Activated T-helper 2 cell treated with anti-CD3 and anti-CD28 coated beads, Interferon-gamma antibody, Interleukin-2, Interleukin-4, amounts not matched to agents 10 μg/mL and 5 μg/mL and 100 μg/mL, durations not matched to agents 14 hours and 24 hours and 36 hours (primary cell): ENCODE measurements at regions of chr13 and their contacts with region 1.

Region 1: GRCh38 chr13:40026174-40026585 is 370.7 kb downstream of the COG6 start:
- DNase-seq: peak; percentile 64
- H3K4me3 Mint-ChIP-seq: no peak overlapping the region
- H3K27ac Mint-ChIP-seq: peak overlapping the region; percentile 55
- H3K4me1 Mint-ChIP-seq: peaks cover 42% of the 10 kb centered on the region
- H3K27me3 Mint-ChIP-seq: no peaks in the 10 kb centered on the region

Region 2: DNA sequence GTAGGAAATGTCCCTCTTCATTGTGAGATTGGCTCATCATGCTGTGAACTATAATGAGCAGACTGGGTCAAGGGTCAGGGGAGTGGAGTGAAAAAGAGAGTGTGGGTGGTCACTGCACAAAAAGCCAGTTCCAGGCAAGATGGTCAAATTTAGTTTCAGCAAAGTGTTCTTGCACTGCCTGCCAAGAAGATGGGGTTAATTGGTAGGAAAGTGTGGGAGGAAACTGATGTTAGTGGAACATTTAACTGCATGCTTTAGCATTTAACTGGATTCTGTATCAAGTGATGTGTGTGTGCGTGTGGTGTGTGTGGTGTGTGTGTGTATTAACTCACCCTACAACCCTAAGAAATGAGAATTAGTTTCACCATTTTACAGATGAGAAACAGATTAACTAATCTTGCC is 239.1 kb before region 1 on chr13:
- intact Hi-C with region 1: loop called (anchors 1 kb)
- DNase-seq: no peak
- H3K4me3 Mint-ChIP-seq: no peak overlapping the region
- H3K27ac Mint-ChIP-seq: peak overlapping the region; percentile 34
- H3K4me1 Mint-ChIP-seq: peaks cover 21% of the 10 kb centered on the region
- H3K27me3 Mint-ChIP-seq: no peaks in the 10 kb centered on the region

Region 3: DNA sequence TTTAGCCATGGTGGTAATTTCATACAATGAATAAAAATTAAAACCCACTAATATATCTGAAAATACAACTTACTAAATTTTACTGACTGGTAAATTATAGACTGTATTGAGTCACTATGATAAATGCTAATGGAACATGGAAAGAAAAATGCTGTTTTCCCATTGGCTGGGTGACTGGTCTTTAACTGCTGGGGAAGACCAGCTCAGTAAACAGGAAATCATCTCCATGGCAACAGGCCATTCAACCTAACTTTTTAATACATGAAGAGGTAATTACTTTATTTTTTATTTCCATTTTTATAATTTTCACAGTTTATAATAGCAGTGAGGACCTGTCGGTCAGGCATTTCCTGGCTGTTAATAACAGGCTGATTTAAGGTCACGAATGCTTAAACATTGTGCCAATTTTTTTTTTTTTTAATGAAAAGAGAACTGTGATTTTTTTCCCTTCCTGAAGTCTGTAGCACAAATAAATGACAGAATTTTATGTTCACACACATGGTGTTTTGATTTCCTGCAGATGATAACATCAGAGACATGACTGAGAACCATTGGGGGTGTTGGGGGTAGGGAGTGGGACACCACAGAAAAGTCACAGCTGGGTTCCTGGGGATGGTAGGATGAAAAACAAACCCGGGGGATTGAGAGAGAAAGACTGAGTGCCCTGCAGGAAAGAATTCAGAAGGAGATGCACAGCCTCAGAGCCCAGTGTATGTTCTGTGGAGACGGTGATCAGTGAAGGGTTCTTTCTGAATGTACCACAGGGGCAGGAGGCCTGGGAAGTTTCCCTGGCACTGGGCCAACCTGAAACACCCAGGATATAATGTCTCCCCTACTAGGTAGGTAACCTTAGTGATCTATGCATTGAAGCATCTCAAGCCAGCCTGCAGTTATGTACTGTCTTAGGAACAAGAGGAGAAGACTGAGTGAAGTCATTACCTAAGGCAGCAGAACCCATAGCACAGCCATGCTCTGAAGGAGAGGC is 73.6 kb before region 1 on chr13:
- intact Hi-C with region 1: loop called (anchors 1 kb)
- DNase-seq: no peak
- H3K4me3 Mint-ChIP-seq: no peak overlapping the region
- H3K27ac Mint-ChIP-seq: peak overlapping the region; percentile 6
- H3K4me1 Mint-ChIP-seq: peaks cover 42% of the 10 kb centered on the region
- H3K27me3 Mint-ChIP-seq: peaks cover 6% of the 10 kb centered on the region

Region 4: DNA sequence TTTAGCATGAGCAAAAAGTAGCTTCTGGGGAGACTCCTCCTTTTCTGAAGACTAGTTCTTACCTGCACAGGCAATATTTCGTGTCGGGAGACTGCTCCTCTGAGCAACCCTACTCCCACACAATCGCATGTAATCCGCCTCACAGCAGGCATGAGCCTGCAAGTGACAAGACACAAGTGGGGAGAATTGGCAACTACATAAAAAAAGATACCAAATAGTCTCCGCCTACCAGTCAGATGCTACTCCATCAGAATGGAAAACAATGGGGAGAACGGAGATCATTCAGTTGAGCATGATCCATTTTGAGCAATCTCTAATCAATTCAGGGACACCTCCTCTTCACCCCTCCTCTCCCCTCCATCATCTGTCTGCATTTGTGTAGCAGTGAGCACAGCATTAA is 49.7 kb before region 1 on chr13:
- intact Hi-C with region 1: no loop called
- DNase-seq: no peak
- H3K4me3 Mint-ChIP-seq: no peak overlapping the region
- H3K27ac Mint-ChIP-seq: no peak overlapping the region
- H3K4me1 Mint-ChIP-seq: no peaks in the 10 kb centered on the region
- H3K27me3 Mint-ChIP-seq: peaks cover 14% of the 10 kb centered on the region

Region 5: DNA sequence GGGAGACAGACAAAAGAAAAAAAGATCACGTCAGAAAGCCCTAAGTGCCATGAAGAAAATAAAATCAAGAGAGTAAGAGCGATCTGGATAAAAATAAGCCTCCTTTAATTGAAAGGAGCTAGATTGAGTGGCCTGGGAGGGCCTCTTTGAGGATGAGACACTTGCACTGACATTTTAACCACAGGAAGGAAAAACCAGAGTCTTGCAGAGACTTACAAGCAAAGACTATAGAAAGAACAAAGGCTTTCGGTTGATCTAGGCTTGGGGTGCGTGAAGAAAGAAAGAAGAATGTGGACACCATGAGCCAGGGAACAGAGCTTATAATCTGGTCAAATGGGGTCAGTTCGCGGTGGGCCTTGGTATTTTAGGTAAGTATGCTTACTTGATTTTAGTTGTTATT is 28.0 kb before region 1 on chr13:
- intact Hi-C with region 1: no loop called
- DNase-seq: no peak
- H3K4me3 Mint-ChIP-seq: no peak overlapping the region
- H3K27ac Mint-ChIP-seq: no peak overlapping the region
- H3K4me1 Mint-ChIP-seq: peaks cover 13% of the 10 kb centered on the region
- H3K27me3 Mint-ChIP-seq: no peaks in the 10 kb centered on the region

Region 6: DNA sequence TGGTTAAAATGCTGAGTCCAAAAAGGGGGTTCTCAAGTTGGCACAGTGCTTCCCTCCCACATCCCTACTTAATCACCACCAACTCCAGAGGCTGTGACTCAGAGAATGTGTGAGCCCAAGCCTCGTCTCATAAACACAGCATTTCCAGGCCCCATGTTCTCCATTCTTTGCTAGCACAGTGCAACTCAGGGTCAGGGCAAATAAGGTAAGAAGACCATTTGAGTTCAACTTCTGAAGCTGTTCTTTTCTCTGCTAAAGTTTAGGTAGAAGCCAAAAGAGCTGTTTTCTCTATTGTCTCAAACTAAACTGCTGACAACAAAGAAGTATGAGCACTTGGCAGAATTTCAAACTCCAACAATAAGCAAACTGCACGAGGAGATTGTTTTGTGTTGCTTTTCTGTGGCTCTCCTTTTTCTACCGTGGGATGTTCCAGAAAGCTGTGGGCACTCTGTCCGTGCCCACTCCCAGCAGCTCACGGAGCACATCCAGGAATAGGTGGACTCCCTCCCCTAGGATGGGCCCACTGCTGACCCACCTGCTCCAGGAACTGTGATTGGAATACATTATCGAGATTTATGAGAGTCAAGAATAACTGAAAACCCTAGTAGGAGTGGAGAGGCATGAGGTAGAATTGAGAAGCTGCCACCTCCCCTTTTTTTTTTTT is 123.6 kb after region 1 on chr13:
- intact Hi-C with region 1: loop called (anchors 5 kb)
- DNase-seq: no peak
- H3K4me3 Mint-ChIP-seq: no peak overlapping the region
- H3K27ac Mint-ChIP-seq: peak overlapping the region; percentile 40
- H3K4me1 Mint-ChIP-seq: peaks cover 55% of the 10 kb centered on the region
- H3K27me3 Mint-ChIP-seq: no peaks in the 10 kb centered on the region

Region 7: DNA sequence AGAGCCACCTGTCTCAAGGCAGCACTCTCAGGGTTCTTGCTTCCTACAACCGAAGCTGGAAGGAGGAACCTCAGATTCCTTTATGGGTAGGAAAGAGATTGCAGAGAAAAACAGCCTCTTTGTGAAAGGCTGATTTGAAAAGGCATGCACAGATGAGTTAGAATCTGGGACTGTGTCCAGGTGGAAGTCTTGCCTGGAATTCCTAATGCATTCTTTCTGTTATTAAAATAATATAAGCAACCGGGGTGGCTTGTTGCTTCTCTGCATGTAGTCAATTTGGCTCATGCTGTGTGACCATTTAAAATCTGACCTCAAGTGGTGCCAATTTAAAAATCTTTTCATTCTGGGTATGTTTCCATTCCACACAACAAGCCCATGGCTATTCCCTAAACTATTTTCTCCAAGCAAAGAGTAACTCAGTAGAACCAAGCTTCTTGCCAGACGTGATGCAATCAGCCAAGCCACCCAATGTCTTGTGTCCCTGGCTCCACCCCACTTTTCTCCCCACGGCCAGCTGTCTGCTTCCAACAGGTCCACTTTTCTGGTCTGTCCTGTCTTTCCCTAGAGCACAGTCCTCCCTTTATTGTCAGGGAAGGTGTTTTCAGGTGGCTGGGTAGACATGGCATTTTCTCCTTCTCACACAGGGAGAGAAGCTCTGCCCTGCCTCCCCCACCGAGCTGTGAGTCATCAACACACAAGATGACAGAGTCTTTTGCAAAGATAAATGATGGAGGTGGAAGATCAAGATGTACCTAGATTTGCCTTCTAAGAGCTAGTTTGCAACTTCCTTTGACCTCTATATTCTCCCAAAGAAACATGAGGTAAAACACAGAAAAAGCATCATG is 246.0 kb after region 1 on chr13:
- intact Hi-C with region 1: no loop called
- DNase-seq: no peak
- H3K4me3 Mint-ChIP-seq: no peak overlapping the region
- H3K27ac Mint-ChIP-seq: peak overlapping the region; percentile 64
- H3K4me1 Mint-ChIP-seq: peaks cover 13% of the 10 kb centered on the region
- H3K27me3 Mint-ChIP-seq: no peaks in the 10 kb centered on the region

Region 8: GRCh38 chr13:40517486-40518480 is 491.6 kb after region 1 on chr13:
- intact Hi-C with region 1: loop called (anchors 10 kb)
- DNase-seq: no peak
- H3K4me3 Mint-ChIP-seq: peak overlapping the region; percentile 42
- H3K27ac Mint-ChIP-seq: peak overlapping the region; percentile 81
- H3K4me1 Mint-ChIP-seq: peaks cover 57% of the 10 kb centered on the region
- H3K27me3 Mint-ChIP-seq: no peaks in the 10 kb centered on the region

Region 9: DNA sequence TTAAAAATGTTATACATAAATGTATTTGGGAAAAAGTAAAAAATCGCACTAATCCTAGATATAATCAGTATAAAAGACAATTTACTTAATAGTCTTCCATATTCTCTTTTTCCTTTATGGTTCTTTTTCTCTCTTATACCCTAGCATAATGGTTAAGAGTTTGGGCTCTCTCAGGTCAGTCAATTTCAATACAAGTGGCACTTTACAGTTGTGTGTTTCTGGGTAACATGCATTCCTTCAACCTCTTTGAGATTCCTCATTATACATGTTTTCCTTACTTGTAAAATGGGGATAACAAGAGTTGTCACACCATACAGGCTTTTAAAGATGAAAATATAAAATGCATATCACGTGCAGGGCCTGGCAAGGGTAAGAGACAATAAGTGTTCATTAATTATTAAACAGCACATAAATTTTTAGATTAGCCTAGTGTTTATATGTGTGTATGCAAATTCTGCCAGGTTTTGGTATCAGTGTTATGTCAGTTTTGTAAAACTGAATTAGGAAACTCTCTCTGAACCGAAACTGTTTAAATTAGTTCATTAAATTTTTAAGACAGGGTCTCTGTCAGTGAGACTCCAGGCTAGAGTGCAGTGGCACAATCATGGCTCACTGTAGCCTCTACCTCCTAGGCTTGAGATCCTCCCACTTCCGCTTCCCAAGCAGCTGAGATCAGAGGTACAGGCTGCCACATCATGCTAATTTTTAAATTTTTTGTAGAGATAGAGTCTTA is 943.2 kb after region 1 on chr13:
- intact Hi-C with region 1: no loop called
- DNase-seq: no peak
- H3K4me3 Mint-ChIP-seq: no peak overlapping the region
- H3K27ac Mint-ChIP-seq: peak overlapping the region; percentile 11
- H3K4me1 Mint-ChIP-seq: peaks cover 65% of the 10 kb centered on the region
- H3K27me3 Mint-ChIP-seq: no peaks in the 10 kb centered on the region